SK-N-SH (cell line): ENCODE measurements at regions of chr2 and their contacts with region 1.

Region 1: GRCh38 chr2:12716282-12717190 is at the start of gene TRIB2:
- DNase-seq: peak; percentile 98
- H3K4me3 ChIP-seq: peak within 1 kb of the TSS; percentile 93 to 98
- H3K27ac ChIP-seq: peak within 1 kb of the TSS; percentile 92 to 93
- H3K4me1 ChIP-seq: peaks cover 28 to 34% of the 10 kb centered on the region in 2 experiments
- H3K27me3 ChIP-seq: no peaks in the 10 kb centered on the region
- CTCF ChIP-seq: 0 out of 2 replicates have a peak, but pooled peaks have one; percentile 19
- EP300 ChIP-seq: no peak; a peak in 2 of 4 replicates
- RAD21 ChIP-seq: peak; percentile 53
- polyA plus RNA-seq, gene TRIB2: 21.0 and 27.5 TPM in 2 replicates

Region 2: DNA sequence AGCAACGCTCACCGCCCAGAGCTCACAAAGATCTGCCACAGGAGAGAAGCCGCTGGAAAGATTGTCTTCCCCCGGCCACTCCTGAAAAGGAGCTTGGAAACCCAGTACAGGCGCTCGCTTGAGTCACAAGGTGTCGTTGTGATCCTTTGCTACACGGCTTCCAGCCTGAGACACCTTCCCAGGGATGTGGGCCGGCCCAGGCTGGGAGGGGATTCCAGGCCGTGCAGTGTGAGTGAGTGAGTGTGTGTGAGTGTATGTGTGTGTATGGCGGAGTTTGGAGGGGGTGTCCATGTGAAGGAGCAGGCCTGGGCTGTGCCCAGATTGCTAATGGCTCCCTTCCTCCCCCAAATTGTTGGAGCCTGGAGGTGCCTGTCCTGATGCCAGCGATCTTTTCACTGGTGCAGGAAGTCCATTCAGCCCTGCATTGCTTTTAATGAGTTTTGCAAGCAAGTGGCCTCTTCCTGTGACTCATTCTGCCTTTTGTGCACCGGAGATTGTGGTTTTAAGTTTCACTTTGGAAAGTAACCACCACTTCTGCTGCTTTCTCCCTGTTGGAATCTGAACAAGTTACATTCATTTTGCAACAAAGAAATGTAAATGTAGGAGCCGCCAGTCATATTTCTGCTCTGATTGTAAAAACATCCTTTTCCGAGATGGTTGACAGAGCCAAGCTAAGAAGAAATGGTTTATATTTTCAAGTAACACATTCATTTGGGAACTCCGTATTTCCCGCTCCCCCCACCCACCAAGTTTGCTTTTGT is 886.4 kb before region 1 on chr2:
- CTCF ChIA-PET with region 1: interaction called, 118 read pairs
- POLR2A ChIA-PET with region 1: interaction called, 20 read pairs
- DNase-seq: peak; percentile 85
- H3K4me3 ChIP-seq: peak overlapping the region; percentile 27 to 32
- H3K27ac ChIP-seq: peak overlapping the region; percentile 94 to 95
- H3K4me1 ChIP-seq: peaks cover 38 to 40% of the 10 kb centered on the region in 2 experiments
- H3K27me3 ChIP-seq: no peaks in the 10 kb centered on the region
- CTCF ChIP-seq: peak; percentile 61
- EP300 ChIP-seq: peak in 1 of 2 experiments; percentile 99; a peak in 2 of 4 replicates
- RAD21 ChIP-seq: peak; percentile 85

Region 3: GRCh38 chr2:12081481-12082210 is 634.9 kb before region 1 on chr2:
- CTCF ChIA-PET with region 1: interaction called, 15 read pairs
- POLR2A ChIA-PET with region 1: no interaction called
- DNase-seq: no peak
- H3K4me3 ChIP-seq: no peak overlapping the region
- H3K27ac ChIP-seq: no peak overlapping the region
- H3K4me1 ChIP-seq: peaks cover 0 to 26% of the 10 kb centered on the region in 2 experiments
- H3K27me3 ChIP-seq: no peaks in the 10 kb centered on the region
- CTCF ChIP-seq: no peak
- EP300 ChIP-seq: no peak
- RAD21 ChIP-seq: no peak

Region 4: GRCh38 chr2:12442476-12442847 is 274.1 kb before region 1 on chr2:
- CTCF ChIA-PET with region 1: interaction called, 13 read pairs
- POLR2A ChIA-PET with region 1: no interaction called
- DNase-seq: no peak
- H3K4me3 ChIP-seq: no peak overlapping the region
- H3K27ac ChIP-seq: peak overlapping the region in 1 of 2 experiments; percentile 18; a peak in 1 of 4 replicates
- H3K4me1 ChIP-seq: no peaks in the 10 kb centered on the region; a peak in 1 of 4 replicates
- H3K27me3 ChIP-seq: no peaks in the 10 kb centered on the region
- CTCF ChIP-seq: no peak
- EP300 ChIP-seq: no peak
- RAD21 ChIP-seq: no peak

Region 5: GRCh38 chr2:12702305-12703121 is 14.0 kb before region 1 on chr2:
- CTCF ChIA-PET with region 1: interaction called, 36 read pairs
- POLR2A ChIA-PET with region 1: no interaction called
- DNase-seq: no peak
- H3K4me3 ChIP-seq: peak overlapping the region in 1 of 2 experiments; percentile 9; a peak in 1 of 4 replicates
- H3K27ac ChIP-seq: peak overlapping the region in 1 of 2 experiments; percentile 99; a peak in 3 of 4 replicates
- H3K4me1 ChIP-seq: peaks cover 0 to 34% of the 10 kb centered on the region in 2 experiments; a peak in 2 of 4 replicates
- H3K27me3 ChIP-seq: no peaks in the 10 kb centered on the region
- CTCF ChIP-seq: no peak
- EP300 ChIP-seq: peak in 1 of 2 experiments; percentile 26; a peak in 1 of 4 replicates
- RAD21 ChIP-seq: no peak

Region 6: GRCh38 chr2:12754643-12755042 is 38.1 kb after region 1 on chr2:
- CTCF ChIA-PET with region 1: interaction called, 18 read pairs
- POLR2A ChIA-PET with region 1: no interaction called
- DNase-seq: no peak
- H3K4me3 ChIP-seq: no peak overlapping the region
- H3K27ac ChIP-seq: no peak overlapping the region
- H3K4me1 ChIP-seq: peaks cover 8 to 12% of the 10 kb centered on the region in 2 experiments
- H3K27me3 ChIP-seq: no peaks in the 10 kb centered on the region
- CTCF ChIP-seq: no peak
- EP300 ChIP-seq: no peak
- RAD21 ChIP-seq: no peak

Region 7: GRCh38 chr2:12965540-12966269 is 249.2 kb after region 1 on chr2:
- CTCF ChIA-PET with region 1: interaction called, 10 read pairs
- POLR2A ChIA-PET with region 1: no interaction called
- DNase-seq: peak; percentile 55
- H3K4me3 ChIP-seq: no peak overlapping the region
- H3K27ac ChIP-seq: peak overlapping the region; percentile 33 to 98; a peak in 3 of 4 replicates
- H3K4me1 ChIP-seq: peaks cover 7 to 31% of the 10 kb centered on the region in 2 experiments
- H3K27me3 ChIP-seq: no peaks in the 10 kb centered on the region
- CTCF ChIP-seq: no peak
- EP300 ChIP-seq: peak; percentile 84 to 85
- RAD21 ChIP-seq: no peak